HEK293 (cell line): ENCODE measurements at regions of chr2 and their contacts with region 1.

Region 1: GRCh38 chr2:27032495-27033252 is at the start of gene TMEM214:
- H3K4me3 ChIP-seq: peak within 1 kb of the TSS; percentile 86
- H3K27ac ChIP-seq: peak within 1 kb of the TSS; percentile 66
- H3K4me1 ChIP-seq: 0 out of 2 replicates have a peak, but pooled peaks cover 5% of the 10 kb centered on the region
- CTCF ChIP-seq: 0 out of 2 replicates have a peak, but pooled peaks have one; percentile 29

Region 2: DNA sequence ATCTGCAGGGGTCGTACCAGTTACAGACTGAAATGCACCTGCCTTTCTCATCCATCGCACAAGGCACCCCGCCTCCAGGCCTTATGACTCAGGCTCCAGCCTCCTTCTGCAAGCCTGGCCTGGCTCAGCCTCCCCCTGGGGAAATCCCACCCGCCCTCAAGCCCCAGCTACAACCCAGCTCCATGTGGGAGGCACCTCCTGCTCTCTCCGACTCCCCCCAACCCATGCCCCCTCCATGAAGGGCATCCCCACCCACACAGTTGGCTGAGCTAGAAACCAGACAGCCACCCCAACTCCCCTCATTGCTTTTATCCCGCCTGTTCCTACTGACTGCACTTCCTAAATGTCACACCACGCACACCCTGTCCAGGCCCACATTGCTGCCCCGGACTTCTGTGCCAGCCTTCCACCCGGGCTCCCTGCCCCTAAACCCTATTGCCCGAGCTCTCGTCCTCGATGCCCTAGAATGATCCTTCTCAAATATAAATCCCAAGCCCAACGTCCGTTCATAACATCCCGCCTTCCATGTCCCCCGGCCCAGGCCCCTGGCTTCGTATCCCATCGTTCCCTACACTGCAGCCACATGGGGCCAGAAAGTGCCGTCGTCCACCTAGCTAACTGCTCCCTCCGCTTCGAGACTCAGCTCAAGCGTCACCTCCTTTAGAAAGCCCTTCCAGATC is 1700.8 kb before region 1 on chr2:
- CTCF ChIA-PET with region 1: no interaction called
- POLR2A ChIA-PET with region 1: interaction called, 11 read pairs
- H3K4me3 ChIP-seq: no peak overlapping the region
- H3K27ac ChIP-seq: no peak overlapping the region
- H3K4me1 ChIP-seq: peaks cover 9% of the 10 kb centered on the region; the same call in 1 of the 2 replicates
- CTCF ChIP-seq: no peak

Region 3: GRCh38 chr2:27050281-27050995 is 17.8 kb after region 1 on chr2:
- CTCF ChIA-PET with region 1: interaction called, 5 read pairs
- POLR2A ChIA-PET with region 1: interaction called, 35 read pairs
- H3K4me3 ChIP-seq: peak overlapping the region; percentile 82
- H3K27ac ChIP-seq: peak overlapping the region; percentile 73
- H3K4me1 ChIP-seq: peaks cover 4% of the 10 kb centered on the region
- CTCF ChIP-seq: peak; percentile 72